Heart left ventricle (tissue), 16 donors: ENCODE measurements at regions of chr1 and their contacts with region 1.

Region 1: DNA sequence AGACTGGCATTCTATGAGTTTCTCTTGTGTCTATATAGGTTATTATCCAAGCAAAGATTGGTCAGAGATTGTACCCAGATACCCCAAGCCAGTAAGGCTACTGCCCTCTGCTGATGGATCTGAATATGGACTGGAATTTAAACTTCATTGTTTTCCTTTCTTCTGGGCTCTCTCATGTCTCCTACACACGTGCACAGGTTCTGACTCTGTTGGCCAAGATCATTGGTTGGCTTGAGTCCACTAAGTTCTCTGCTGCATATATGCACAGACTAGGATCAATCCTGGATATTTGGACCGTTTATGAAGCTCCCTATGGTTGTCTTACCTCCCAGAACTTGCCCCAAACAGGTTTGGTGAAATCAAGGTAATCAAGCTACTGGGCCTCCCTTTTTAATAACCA is 69.7 kb downstream of the CC2D1B start:
- DNase-seq: no peak
- ATAC-seq: peak in 3 of 4 donors; percentile 59 to 60 (median 59)
- H3K4me3 ChIP-seq: no peak overlapping the region
- H3K27ac ChIP-seq: no peak overlapping the region
- H3K4me1 ChIP-seq: no peaks in the 10 kb centered on the region
- H3K27me3 ChIP-seq: no peaks in the 10 kb centered on the region
- CTCF ChIP-seq: peak; percentile 45 to 73 (median 62)
- POLR2A ChIP-seq: no peak

Region 2: GRCh38 chr1:52141513-52142219 is 154.7 kb before region 1 on chr1 and contains the start of gene ZFYVE9:
- intact Hi-C with region 1: loop called in 8 of 10 experiments (anchors 2 to 5 kb)
- DNase-seq: peak; percentile 75 to 90 (median 81)
- ATAC-seq: peak; percentile 76 to 97 (median 96)
- H3K4me3 ChIP-seq: peak within 1 kb of the TSS; percentile 48 to 99 (median 89)
- H3K27ac ChIP-seq: peak within 1 kb of the TSS; percentile 87 to 98 (median 94)
- H3K4me1 ChIP-seq: peaks cover 0 to 39% (median 14%) of the 10 kb centered on the region in 12 donors
- H3K27me3 ChIP-seq: peaks cover 0 to 11% (median 0%) of the 10 kb centered on the region in 9 donors
- CTCF ChIP-seq: peak; percentile 34 to 93 (median 70)
- POLR2A ChIP-seq: peak in 1 of 2 donors; percentile 27
- total RNA-seq, gene ZFYVE9: 12.6 to 19.2 (median 17.3) TPM

Region 3: GRCh38 chr1:52574594-52574993 is 278.2 kb after region 1 on chr1:
- intact Hi-C with region 1: loop called in 1 of 10 experiments (anchors 5 kb)
- DNase-seq: no peak
- ATAC-seq: no peak
- H3K4me3 ChIP-seq: no peak overlapping the region
- H3K27ac ChIP-seq: no peak overlapping the region
- H3K4me1 ChIP-seq: peaks cover 0 to 7% (median 0%) of the 10 kb centered on the region in 12 donors
- H3K27me3 ChIP-seq: no peaks in the 10 kb centered on the region
- CTCF ChIP-seq: no peak
- POLR2A ChIP-seq: no peak